Activated CD8-positive, alpha-beta T cell treated with anti-CD3 and anti-CD28 coated beads, Interleukin-2, amount 10 ng/mL, durations not matched to agents 7 days and 5 days (primary cell): ENCODE measurements at regions of chr19 and their contacts with region 1.

Region 1: DNA sequence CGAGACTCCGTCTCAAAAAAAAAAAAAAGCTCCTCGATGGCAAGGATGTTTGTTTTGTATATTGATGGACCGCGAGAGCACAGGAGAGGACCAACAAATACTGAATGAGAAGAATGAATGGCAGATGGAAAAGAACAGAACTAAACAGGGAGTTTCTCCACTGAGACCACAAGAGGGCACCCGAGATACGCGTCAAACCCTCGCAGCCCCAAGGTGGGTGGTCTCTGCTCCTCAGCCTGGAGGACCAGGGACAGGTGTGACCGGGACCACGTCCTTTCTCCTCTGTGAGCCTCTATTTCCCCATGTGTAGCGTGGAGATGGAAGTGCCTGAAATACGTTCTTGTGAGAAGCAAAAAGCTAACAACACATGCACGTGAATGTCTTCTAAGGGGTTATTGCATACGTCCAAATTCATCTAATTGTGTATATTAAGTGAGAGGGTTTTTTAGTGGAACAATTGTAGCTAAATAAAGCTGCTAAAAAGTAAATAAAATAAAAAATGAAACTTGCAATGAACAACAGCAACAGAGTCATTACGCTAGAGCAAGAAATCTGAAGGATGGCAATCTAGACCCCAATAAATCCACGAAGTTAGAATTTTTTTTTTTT is 8.3 kb upstream of the CDC42EP5 start:
- DNase-seq: peak; percentile 60
- ATAC-seq: peak; percentile 64
- H3K4me3 Mint-ChIP-seq: no peak overlapping the region
- H3K27ac Mint-ChIP-seq: no peak overlapping the region
- H3K4me1 Mint-ChIP-seq: peaks cover 32% of the 10 kb centered on the region
- H3K27me3 Mint-ChIP-seq: peaks cover 30% of the 10 kb centered on the region

Region 2: GRCh38 chr19:54302257-54302656 is 179.2 kb before region 1 on chr19:
- CTCF ChIA-PET with region 1: no interaction called
- POLR2A ChIA-PET with region 1: no interaction called
- DNase-seq: no peak
- ATAC-seq: no peak
- H3K4me3 Mint-ChIP-seq: no peak overlapping the region
- H3K27ac Mint-ChIP-seq: no peak overlapping the region
- H3K4me1 Mint-ChIP-seq: peaks cover 33% of the 10 kb centered on the region
- H3K27me3 Mint-ChIP-seq: peaks cover 9% of the 10 kb centered on the region

Region 3: GRCh38 chr19:54451331-54451871 is 30.0 kb before region 1 on chr19:
- CTCF ChIA-PET with region 1: no interaction called
- POLR2A ChIA-PET with region 1: no interaction called
- DNase-seq: no peak
- ATAC-seq: no peak
- H3K4me3 Mint-ChIP-seq: peak overlapping the region; percentile 97
- H3K27ac Mint-ChIP-seq: peak overlapping the region; percentile 100
- H3K4me1 Mint-ChIP-seq: peaks cover 36% of the 10 kb centered on the region
- H3K27me3 Mint-ChIP-seq: no peaks in the 10 kb centered on the region

Region 4: DNA sequence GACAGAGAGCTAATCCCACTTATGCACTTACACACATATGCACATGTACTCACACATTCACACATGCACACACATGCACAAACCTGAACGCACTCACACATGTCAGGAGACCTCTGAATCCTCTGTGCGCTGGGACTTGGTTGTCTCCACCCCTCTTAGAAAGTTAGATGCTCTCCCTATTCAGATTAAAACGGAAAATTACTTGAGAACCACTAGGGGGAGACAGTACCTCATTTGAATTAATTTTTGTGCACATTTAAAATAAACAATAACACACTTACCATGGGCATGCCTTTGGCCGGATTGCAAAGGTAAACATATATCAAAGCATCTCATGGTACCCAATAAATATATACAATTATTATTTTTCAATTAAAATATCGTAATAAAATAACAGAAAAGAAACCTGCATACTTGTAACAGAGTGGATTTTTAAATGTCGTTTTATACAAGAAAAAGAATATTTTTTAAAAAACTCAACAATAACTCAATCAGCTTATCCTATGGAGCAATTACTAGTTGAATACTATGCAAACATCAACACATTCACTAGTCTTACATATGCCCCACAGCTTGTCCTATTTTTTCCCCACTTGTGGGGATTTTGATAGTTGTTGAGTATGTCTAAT is 171.9 kb after region 1 on chr19:
- CTCF ChIA-PET with region 1: interaction called, 30 read pairs
- POLR2A ChIA-PET with region 1: no interaction called
- DNase-seq: no peak
- ATAC-seq: no peak
- H3K4me3 Mint-ChIP-seq: no peak overlapping the region
- H3K27ac Mint-ChIP-seq: no peak overlapping the region
- H3K4me1 Mint-ChIP-seq: no peaks in the 10 kb centered on the region
- H3K27me3 Mint-ChIP-seq: peaks cover 8% of the 10 kb centered on the region